ENCODE measurements at regions of chr10 and their contacts with region 1.

Region 1: GRCh38 chr10:104121520-104122224 is at the start of gene SFR1:
- DNase-seq: peak; percentile 98 to 99
- H3K4me3 ChIP-seq: peak within 1 kb of the TSS; percentile 92
- H3K4me3 Mint-ChIP-seq: peak within 1 kb of the TSS; percentile 79
- H3K27ac Mint-ChIP-seq: peak within 1 kb of the TSS; percentile 96
- H3K4me1 ChIP-seq: peaks cover 13% of the 10 kb centered on the region; the same call in 1 of the 2 replicates
- H3K4me1 Mint-ChIP-seq: no peaks in the 10 kb centered on the region
- H3K27me3 ChIP-seq: no peaks in the 10 kb centered on the region
- H3K27me3 Mint-ChIP-seq: no peaks in the 10 kb centered on the region
- CTCF ChIP-seq: peak; percentile 60 to 62
- total RNA-seq, gene SFR1: 7.3 and 8.7 TPM in 2 replicates

Region 2: GRCh38 chr10:103598654-103599115 is 523.0 kb before region 1 on chr10:
- CTCF ChIA-PET with region 1: no interaction called
- POLR2A ChIA-PET with region 1: no interaction called
- intact Hi-C with region 1: no loop called
- DNase-seq: peak; percentile 79 to 80
- H3K4me3 ChIP-seq: no peak overlapping the region
- H3K4me3 Mint-ChIP-seq: no peak overlapping the region
- H3K27ac Mint-ChIP-seq: no peak overlapping the region
- H3K4me1 ChIP-seq: no peaks in the 10 kb centered on the region
- H3K4me1 Mint-ChIP-seq: peaks cover 7% of the 10 kb centered on the region
- H3K27me3 ChIP-seq: no peaks in the 10 kb centered on the region
- H3K27me3 Mint-ChIP-seq: no peaks in the 10 kb centered on the region
- CTCF ChIP-seq: peak; percentile 76 to 82

Region 3: GRCh38 chr10:103983367-103983911 is 138.2 kb before region 1 on chr10:
- CTCF ChIA-PET with region 1: no interaction called
- POLR2A ChIA-PET with region 1: no interaction called
- intact Hi-C with region 1: loop called (anchors 5 kb)
- DNase-seq: no peak
- H3K4me3 ChIP-seq: no peak overlapping the region
- H3K4me3 Mint-ChIP-seq: no peak overlapping the region
- H3K27ac Mint-ChIP-seq: no peak overlapping the region
- H3K4me1 ChIP-seq: peaks cover 10% of the 10 kb centered on the region
- H3K4me1 Mint-ChIP-seq: peaks cover 7% of the 10 kb centered on the region
- H3K27me3 ChIP-seq: no peaks in the 10 kb centered on the region
- H3K27me3 Mint-ChIP-seq: no peaks in the 10 kb centered on the region
- CTCF ChIP-seq: no peak

Region 4: GRCh38 chr10:104056619-104057273 is 64.9 kb before region 1 on chr10:
- CTCF ChIA-PET with region 1: no interaction called
- POLR2A ChIA-PET with region 1: no interaction called
- intact Hi-C with region 1: no loop called
- DNase-seq: no peak
- H3K4me3 ChIP-seq: no peak overlapping the region
- H3K4me3 Mint-ChIP-seq: no peak overlapping the region
- H3K27ac Mint-ChIP-seq: no peak overlapping the region
- H3K4me1 ChIP-seq: peaks cover 13% of the 10 kb centered on the region; the same call in 1 of the 2 replicates
- H3K4me1 Mint-ChIP-seq: no peaks in the 10 kb centered on the region
- H3K27me3 ChIP-seq: no peaks in the 10 kb centered on the region
- H3K27me3 Mint-ChIP-seq: no peaks in the 10 kb centered on the region
- CTCF ChIP-seq: no peak

Region 5: DNA sequence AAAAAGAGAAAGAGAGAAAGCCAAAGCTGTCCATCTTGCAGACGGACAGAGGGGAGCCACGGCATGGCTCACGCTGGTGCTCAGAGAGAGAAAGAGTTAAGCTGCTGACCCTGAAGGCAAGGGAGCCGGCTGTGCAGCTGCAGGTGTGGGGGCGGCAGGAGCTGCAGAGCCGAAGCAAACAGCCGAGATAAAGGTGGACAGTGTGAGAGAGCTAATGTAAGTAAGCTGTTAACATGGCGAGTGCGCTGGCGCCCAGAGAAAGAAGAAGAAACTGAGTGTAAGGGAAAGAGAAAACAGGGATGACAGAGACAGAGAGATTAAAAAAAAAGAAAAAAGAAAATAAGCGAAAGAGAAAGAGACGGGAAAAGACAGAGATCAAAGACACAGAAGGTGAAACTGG is 54.1 kb before region 1 on chr10:
- CTCF ChIA-PET with region 1: no interaction called
- POLR2A ChIA-PET with region 1: no interaction called
- intact Hi-C with region 1: loop called (anchors 5 kb)
- DNase-seq: peak in 1 of 2 experiments; percentile 28
- H3K4me3 ChIP-seq: no peak overlapping the region
- H3K4me3 Mint-ChIP-seq: peak overlapping the region; percentile 54
- H3K27ac Mint-ChIP-seq: peak overlapping the region; percentile 65
- H3K4me1 ChIP-seq: peaks cover 51% of the 10 kb centered on the region
- H3K4me1 Mint-ChIP-seq: peaks cover 44% of the 10 kb centered on the region
- H3K27me3 ChIP-seq: no peaks in the 10 kb centered on the region
- H3K27me3 Mint-ChIP-seq: no peaks in the 10 kb centered on the region
- CTCF ChIP-seq: no peak

Region 6: DNA sequence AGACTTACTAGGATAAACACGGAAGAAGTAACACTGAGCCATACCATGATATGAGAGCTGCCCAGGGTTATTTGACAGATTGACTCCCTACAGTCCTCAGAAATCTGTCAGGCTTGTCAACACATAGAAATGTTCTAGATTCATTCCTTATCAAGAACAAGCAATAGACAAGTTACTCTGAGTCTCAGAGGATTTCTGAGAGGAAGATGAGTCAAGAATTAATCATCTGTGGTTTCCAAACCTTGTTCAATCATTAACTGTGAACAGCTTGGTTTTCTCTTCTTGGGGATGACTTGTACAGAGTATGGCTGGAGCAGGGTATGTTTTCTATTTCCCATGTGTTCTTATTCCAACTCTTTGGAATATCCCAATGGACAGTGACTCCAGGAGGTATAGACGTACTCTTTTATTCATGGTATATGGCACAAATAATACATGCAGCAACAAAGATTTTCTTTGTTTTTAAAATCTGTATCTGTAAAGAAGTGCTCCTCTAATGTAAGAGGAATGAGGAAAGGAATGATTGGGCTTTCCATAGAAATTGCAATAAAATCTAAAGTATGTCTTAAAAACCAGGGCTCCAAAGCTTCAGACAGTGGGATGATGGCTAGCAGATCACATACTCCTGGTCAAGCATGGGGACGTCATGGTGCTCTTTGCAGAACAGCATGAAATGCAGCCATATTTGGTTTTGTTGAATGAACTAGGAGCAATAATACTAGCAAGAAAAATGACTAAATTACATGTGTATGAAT is 11.6 kb before region 1 on chr10:
- CTCF ChIA-PET with region 1: interaction called, 13 read pairs
- POLR2A ChIA-PET with region 1: interaction called, 3 read pairs
- intact Hi-C with region 1: loop called (anchors 1 kb)
- DNase-seq: peak in 1 of 2 experiments; percentile 40
- H3K4me3 ChIP-seq: no peak overlapping the region
- H3K4me3 Mint-ChIP-seq: no peak overlapping the region
- H3K27ac Mint-ChIP-seq: no peak overlapping the region
- H3K4me1 ChIP-seq: peaks cover 17% of the 10 kb centered on the region
- H3K4me1 Mint-ChIP-seq: peaks cover 8% of the 10 kb centered on the region
- H3K27me3 ChIP-seq: no peaks in the 10 kb centered on the region
- H3K27me3 Mint-ChIP-seq: peaks cover 7% of the 10 kb centered on the region
- CTCF ChIP-seq: no peak

Region 7: GRCh38 chr10:104254493-104255310 is 133.0 kb after region 1 on chr10 and contains the start of gene GSTO1:
- CTCF ChIA-PET with region 1: interaction called, 14 read pairs
- POLR2A ChIA-PET with region 1: interaction called, 3 read pairs
- intact Hi-C with region 1: loop called (anchors 1 kb)
- DNase-seq: peak; percentile 71 to 80
- H3K4me3 ChIP-seq: peak within 1 kb of the TSS; percentile 83
- H3K4me3 Mint-ChIP-seq: peak within 1 kb of the TSS; percentile 81
- H3K27ac Mint-ChIP-seq: peak within 1 kb of the TSS; percentile 73
- H3K4me1 ChIP-seq: peaks cover 47% of the 10 kb centered on the region
- H3K4me1 Mint-ChIP-seq: peaks cover 39% of the 10 kb centered on the region
- H3K27me3 ChIP-seq: no peaks in the 10 kb centered on the region
- H3K27me3 Mint-ChIP-seq: no peaks in the 10 kb centered on the region
- CTCF ChIP-seq: peak in 1 of 2 experiments; percentile 1
- total RNA-seq, gene GSTO1: 167 and 182 TPM in 2 replicates

Region 8: GRCh38 chr10:104867966-104868598 is 746.4 kb after region 1 on chr10:
- CTCF ChIA-PET with region 1: no interaction called
- POLR2A ChIA-PET with region 1: interaction called, 12 read pairs
- intact Hi-C with region 1: no loop called
- DNase-seq: no peak
- H3K4me3 ChIP-seq: no peak overlapping the region
- H3K4me3 Mint-ChIP-seq: no peak overlapping the region
- H3K27ac Mint-ChIP-seq: no peak overlapping the region
- H3K4me1 ChIP-seq: no peaks in the 10 kb centered on the region
- H3K4me1 Mint-ChIP-seq: no peaks in the 10 kb centered on the region
- H3K27me3 ChIP-seq: no peaks in the 10 kb centered on the region
- H3K27me3 Mint-ChIP-seq: no peaks in the 10 kb centered on the region
- CTCF ChIP-seq: no peak

Measured in Caco-2 (cell line).